Thyroid gland (tissue), 4 donors: ENCODE measurements at regions of chr12 and their contacts with region 1.

Region 1: DNA sequence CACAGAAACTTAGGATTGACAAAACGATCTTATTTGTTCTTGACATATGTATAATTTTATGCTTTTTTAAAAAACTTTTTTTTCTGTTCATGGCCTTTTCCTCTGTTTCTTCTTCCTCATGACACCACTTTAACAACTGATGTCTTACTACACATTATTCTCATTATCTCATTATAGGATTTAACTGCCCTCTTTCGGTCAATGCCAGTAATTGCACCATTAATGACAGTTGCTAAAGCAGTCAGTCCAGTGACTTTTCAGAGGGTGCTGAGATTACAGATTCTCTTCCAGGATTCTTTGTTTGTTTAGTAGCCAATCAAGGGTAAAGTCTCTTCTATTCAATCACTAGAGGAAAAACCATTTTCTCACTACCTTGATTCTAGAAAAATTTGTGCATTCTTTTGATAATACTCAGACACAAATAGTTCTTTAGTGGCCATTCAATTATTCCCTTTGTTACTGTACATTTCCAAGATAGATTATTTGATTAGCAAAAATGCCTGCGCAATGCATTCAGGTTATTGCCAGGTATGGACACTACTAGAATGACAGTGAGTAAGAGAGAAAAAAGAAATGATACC is 50.1 kb downstream of the KLRG1 start:
- DNase-seq: no peak
- H3K4me3 ChIP-seq: no peak overlapping the region
- H3K27ac ChIP-seq: no peak overlapping the region
- H3K4me1 ChIP-seq: no peaks in the 10 kb centered on the region
- H3K27me3 ChIP-seq: no peaks in the 10 kb centered on the region
- CTCF ChIP-seq: peak in 5 of 6 experiments; percentile 31 to 74 (median 66)
- POLR2A ChIP-seq: no peak

Region 2: GRCh38 chr12:8658346-8658745 is 381.1 kb before region 1 on chr12:
- intact Hi-C with region 1: loop called (anchors 10 kb)
- DNase-seq: peak in 1 of 2 donors; percentile 12
- H3K4me3 ChIP-seq: no peak overlapping the region
- H3K27ac ChIP-seq: peak overlapping the region in 1 of 3 donors; percentile 5
- H3K4me1 ChIP-seq: no peaks in the 10 kb centered on the region
- H3K27me3 ChIP-seq: no peaks in the 10 kb centered on the region
- CTCF ChIP-seq: no peak
- POLR2A ChIP-seq: no peak

Region 3: GRCh38 chr12:8949342-8950220 is 89.9 kb before region 1 on chr12 and contains the start of gene M6PR:
- intact Hi-C with region 1: loop called (anchors 10 kb)
- DNase-seq: peak; percentile 93 to 95
- H3K4me3 ChIP-seq: peak within 1 kb of the TSS; percentile 65 to 74 (median 70)
- H3K27ac ChIP-seq: peak within 1 kb of the TSS; percentile 97 to 99 (median 99)
- H3K4me1 ChIP-seq: peaks cover 9 to 14% of the 10 kb centered on the region in 2 donors
- H3K27me3 ChIP-seq: no peaks in the 10 kb centered on the region
- CTCF ChIP-seq: peak in 4 of 6 experiments; percentile 29 to 46 (median 44)
- POLR2A ChIP-seq: peak in 1 of 2 donors; percentile 74
- total RNA-seq, gene M6PR: 112 to 158 (median 136) TPM

Region 4: DNA sequence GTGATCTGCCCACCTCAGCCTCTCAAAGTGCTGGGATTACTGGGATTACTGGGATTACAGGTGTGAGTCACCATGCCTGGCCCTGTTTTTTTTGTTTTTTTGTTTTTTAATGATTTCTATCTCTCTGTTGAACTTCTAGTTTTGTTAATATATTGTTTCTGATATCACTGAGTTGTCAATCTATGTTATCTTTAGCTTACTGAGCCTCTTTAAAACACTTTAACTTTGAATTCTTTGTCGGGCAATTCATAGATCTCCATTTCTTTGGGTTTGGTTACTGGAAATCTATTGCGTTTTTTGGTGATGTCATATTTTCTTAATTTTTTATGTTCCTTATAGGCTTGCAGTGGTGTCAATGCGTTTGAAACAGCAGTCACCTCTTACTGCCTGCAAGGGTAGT is 59.4 kb before region 1 on chr12:
- intact Hi-C with region 1: no loop called
- DNase-seq: no peak
- H3K4me3 ChIP-seq: no peak overlapping the region
- H3K27ac ChIP-seq: no peak overlapping the region
- H3K4me1 ChIP-seq: no peaks in the 10 kb centered on the region
- H3K27me3 ChIP-seq: no peaks in the 10 kb centered on the region
- CTCF ChIP-seq: no peak
- POLR2A ChIP-seq: no peak